CD14-positive monocyte (primary cell): ENCODE measurements at regions of chr12 and their contacts with region 1.

Region 1: GRCh38 chr12:114662512-114663177 is 21.3 kb downstream of the TBX3 start:
- DNase-seq: peak; percentile 9 to 63 (median 37)
- H3K4me3 ChIP-seq: no peak overlapping the region
- H3K4me3 Mint-ChIP-seq: peak overlapping the region in 1 of 2 donors; percentile 73
- H3K27ac ChIP-seq: no peak overlapping the region
- H3K27ac Mint-ChIP-seq: peak overlapping the region in 1 of 7 donors; percentile 53
- H3K4me1 ChIP-seq: no peaks in the 10 kb centered on the region
- H3K4me1 Mint-ChIP-seq: peaks cover 2% of the 10 kb centered on the region
- H3K27me3 ChIP-seq: peaks cover 30 to 48% of the 10 kb centered on the region in 2 donors
- H3K27me3 Mint-ChIP-seq: peaks cover 55 to 65% (median 58%) of the 10 kb centered on the region in 3 donors
- CTCF ChIP-seq: peak; percentile 95

Region 2: DNA sequence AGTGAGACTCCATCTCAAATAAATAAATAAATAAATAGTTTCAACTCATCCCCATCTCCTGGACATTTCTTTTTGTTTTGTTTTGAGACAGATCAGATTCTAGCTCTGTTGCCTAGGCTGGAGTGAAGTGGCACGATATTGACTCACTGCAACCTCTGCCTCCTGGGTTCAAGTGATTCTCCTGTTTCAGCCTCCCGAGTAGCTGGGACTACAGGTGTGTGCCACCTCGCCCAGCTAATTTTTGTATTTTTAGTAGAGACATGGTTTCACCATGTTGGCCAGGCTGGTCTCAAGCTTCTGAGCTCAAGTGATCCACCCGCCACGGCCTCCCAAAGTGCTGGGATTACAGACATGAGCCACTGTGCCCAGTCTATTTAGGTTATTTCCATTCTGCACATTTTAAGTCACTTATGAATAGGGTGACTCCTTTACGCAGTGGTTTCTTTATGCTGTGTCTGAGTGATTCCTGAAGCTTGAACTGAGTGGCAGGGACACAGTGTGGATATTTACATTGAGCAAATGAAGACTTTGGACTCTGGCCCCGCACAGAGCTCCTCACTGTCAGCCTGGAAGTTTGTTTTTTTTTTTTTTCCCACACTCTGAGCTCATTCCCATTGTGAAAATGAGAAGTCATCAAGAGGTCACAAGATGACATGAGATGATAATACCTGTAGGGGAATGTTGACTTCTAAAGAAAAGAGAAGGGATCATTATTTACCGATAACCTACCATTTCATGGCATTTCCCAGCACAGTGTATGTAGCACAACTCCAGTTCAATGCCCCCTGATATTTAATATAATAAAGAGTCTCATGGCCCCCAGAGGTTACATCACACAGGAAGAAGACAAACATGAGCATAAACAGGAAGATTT is 51.3 kb before region 1 on chr12:
- intact Hi-C with region 1: no loop called
- DNase-seq: no peak
- H3K4me3 ChIP-seq: no peak overlapping the region
- H3K4me3 Mint-ChIP-seq: no peak overlapping the region
- H3K27ac ChIP-seq: no peak overlapping the region
- H3K27ac Mint-ChIP-seq: no peak overlapping the region
- H3K4me1 ChIP-seq: no peaks in the 10 kb centered on the region
- H3K4me1 Mint-ChIP-seq: no peaks in the 10 kb centered on the region
- H3K27me3 ChIP-seq: peaks cover 0 to 2% of the 10 kb centered on the region in 2 donors
- H3K27me3 Mint-ChIP-seq: peaks cover 3 to 6% (median 3%) of the 10 kb centered on the region in 3 donors
- CTCF ChIP-seq: no peak

Region 3: DNA sequence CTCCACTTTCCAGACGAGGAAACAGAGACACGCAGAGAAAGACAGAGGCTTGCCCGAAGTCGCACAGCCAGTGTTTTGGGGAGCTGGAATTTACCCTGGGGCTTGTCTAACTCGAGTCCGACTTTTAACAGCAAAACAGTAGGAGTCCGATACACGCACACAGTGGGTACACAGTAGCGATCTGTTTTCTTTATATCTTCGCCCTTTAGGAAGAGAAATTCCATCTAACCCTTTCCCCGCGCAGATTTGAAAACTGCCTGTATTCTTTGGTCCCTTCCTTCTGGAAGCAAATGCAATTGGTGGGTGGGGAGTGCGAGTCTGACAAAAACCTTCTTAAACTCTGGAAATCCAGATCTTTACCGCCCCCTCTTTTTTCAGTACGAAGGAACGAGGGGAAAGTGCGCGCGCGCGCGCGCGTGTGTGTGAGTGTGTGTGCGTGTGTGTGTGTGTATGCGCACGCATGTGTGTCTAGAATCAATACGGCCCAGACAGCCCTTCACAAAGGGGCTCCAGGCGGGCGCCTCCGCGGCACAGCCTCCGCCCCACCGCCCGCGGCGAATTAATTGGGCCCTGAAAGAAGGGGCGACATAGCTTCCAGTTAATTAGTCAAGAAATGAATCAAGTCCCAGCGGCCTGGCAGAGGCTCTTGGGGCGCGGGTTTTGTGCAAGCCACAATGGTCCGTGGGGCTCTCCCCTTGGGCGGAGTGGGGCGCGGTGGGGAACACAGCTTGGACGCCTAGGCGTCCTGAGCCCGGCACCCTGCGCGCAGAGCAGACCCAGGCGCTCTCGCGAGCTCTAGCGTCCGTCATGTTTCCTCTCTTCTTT is 35.3 kb after region 1 on chr12:
- intact Hi-C with region 1: no loop called
- DNase-seq: no peak
- H3K4me3 ChIP-seq: no peak overlapping the region
- H3K4me3 Mint-ChIP-seq: peak overlapping the region in 1 of 2 donors; percentile 80
- H3K27ac ChIP-seq: no peak overlapping the region
- H3K27ac Mint-ChIP-seq: no peak overlapping the region
- H3K4me1 ChIP-seq: no peaks in the 10 kb centered on the region
- H3K4me1 Mint-ChIP-seq: no peaks in the 10 kb centered on the region
- H3K27me3 ChIP-seq: peaks cover 81 to 100% of the 10 kb centered on the region in 2 donors
- H3K27me3 Mint-ChIP-seq: peaks cover 97 to 99% (median 97%) of the 10 kb centered on the region in 3 donors
- CTCF ChIP-seq: no peak

Region 4: DNA sequence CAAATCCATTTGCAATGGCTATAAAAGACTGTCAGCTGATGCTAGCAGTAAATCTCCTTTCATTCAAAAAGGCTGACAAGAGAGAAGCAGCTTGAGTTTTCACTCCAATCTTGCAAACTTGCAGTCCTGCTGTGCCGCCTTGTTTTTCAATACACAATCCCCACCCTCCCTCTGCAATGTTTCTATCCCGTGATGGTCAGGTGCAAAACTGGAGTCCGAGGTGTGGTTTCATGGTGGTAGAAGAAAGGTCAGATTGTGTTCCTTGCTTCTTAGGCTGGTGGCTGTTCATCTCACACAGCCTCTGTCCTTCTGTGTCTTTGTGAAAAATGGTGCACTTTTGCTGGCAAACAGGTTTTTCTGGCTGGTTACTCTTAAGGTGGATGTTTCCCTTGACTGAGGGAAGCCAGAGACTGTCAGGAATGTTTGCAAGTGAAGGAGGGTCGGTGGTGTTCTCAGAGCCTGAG is 49.1 kb after region 1 on chr12:
- intact Hi-C with region 1: no loop called
- DNase-seq: no peak
- H3K4me3 ChIP-seq: no peak overlapping the region
- H3K4me3 Mint-ChIP-seq: peak overlapping the region in 1 of 2 donors; percentile 8
- H3K27ac ChIP-seq: no peak overlapping the region
- H3K27ac Mint-ChIP-seq: no peak overlapping the region
- H3K4me1 ChIP-seq: no peaks in the 10 kb centered on the region
- H3K4me1 Mint-ChIP-seq: no peaks in the 10 kb centered on the region
- H3K27me3 ChIP-seq: peaks cover 2 to 35% of the 10 kb centered on the region in 2 donors
- H3K27me3 Mint-ChIP-seq: peaks cover 18 to 37% (median 35%) of the 10 kb centered on the region in 3 donors
- CTCF ChIP-seq: no peak

Region 5: DNA sequence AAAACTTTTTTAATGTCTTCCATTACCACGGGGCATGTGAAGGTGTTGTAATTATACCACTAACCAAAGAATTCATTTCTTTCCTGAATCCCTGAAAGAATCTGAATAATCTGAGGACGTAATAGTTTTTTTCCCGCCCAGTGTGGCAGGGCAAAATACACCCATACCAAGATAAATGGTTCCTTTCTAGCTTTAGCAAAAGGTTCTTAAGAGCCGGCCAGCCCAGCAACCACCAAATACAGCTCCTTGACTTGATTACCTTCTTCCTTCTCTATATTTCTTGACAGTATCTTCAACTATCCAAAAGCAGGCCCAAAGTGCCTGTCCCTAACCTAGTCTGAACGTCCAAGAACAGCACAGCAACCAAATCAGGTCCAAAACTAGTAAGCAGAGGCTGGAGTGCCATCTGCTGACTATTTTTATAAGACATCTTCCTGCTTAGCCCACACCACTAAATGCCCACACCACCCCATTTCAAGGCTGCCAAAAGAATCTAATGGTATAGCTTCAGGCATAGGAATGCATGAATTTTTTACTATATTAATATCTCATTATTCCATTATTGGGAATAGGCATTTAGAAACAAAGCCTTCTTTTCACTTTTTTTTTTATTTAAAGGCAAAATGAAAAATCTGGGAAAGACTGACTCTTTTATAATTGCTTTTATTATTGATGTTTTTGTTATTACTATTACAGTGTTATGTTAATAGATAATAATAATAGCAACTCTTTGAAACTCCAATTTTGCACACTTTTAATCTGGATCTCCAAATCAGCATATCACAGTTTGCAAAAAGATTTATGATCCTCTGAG is 1090.5 kb after region 1 on chr12:
- intact Hi-C with region 1: loop called (anchors 5 to 10 kb)
- DNase-seq: peak in 1 of 3 donors; percentile 2
- H3K4me3 ChIP-seq: no peak overlapping the region
- H3K4me3 Mint-ChIP-seq: no peak overlapping the region
- H3K27ac ChIP-seq: no peak overlapping the region
- H3K27ac Mint-ChIP-seq: no peak overlapping the region
- H3K4me1 ChIP-seq: no peaks in the 10 kb centered on the region
- H3K4me1 Mint-ChIP-seq: no peaks in the 10 kb centered on the region
- H3K27me3 ChIP-seq: peaks cover 10 to 13% of the 10 kb centered on the region in 2 donors
- H3K27me3 Mint-ChIP-seq: peaks cover 8 to 17% (median 14%) of the 10 kb centered on the region in 3 donors
- CTCF ChIP-seq: no peak

Region 6: GRCh38 chr12:115916910-115917668 is 1254.4 kb after region 1 on chr12:
- intact Hi-C with region 1: loop called (anchors 2 kb)
- DNase-seq: peak; percentile 11 to 39 (median 22)
- H3K4me3 ChIP-seq: no peak overlapping the region
- H3K4me3 Mint-ChIP-seq: peak overlapping the region in 1 of 2 donors; percentile 62
- H3K27ac ChIP-seq: no peak overlapping the region
- H3K27ac Mint-ChIP-seq: no peak overlapping the region
- H3K4me1 ChIP-seq: no peaks in the 10 kb centered on the region
- H3K4me1 Mint-ChIP-seq: peaks cover 2% of the 10 kb centered on the region
- H3K27me3 ChIP-seq: peaks cover 14 to 39% of the 10 kb centered on the region in 2 donors
- H3K27me3 Mint-ChIP-seq: peaks cover 31 to 54% (median 32%) of the 10 kb centered on the region in 3 donors
- CTCF ChIP-seq: peak; percentile 99